ENCODE measurements at regions of chr16 and their contacts with region 1.

Region 1: GRCh38 chr16:75219838-75220237 is 1.1 kb downstream of the CTRB1 start:
- DNase-seq: peak in 1 of 6 donors; percentile 41
- ATAC-seq: no peak
- H3K4me3 ChIP-seq: peak overlapping the region; percentile 11 to 60 (median 46)
- H3K27ac ChIP-seq: peak overlapping the region; percentile 86 to 98 (median 91)
- H3K4me1 ChIP-seq: peaks cover 4 to 11% (median 11%) of the 10 kb centered on the region in 3 donors
- H3K27me3 ChIP-seq: no peaks in the 10 kb centered on the region
- CTCF ChIP-seq: no peak

Region 2: DNA sequence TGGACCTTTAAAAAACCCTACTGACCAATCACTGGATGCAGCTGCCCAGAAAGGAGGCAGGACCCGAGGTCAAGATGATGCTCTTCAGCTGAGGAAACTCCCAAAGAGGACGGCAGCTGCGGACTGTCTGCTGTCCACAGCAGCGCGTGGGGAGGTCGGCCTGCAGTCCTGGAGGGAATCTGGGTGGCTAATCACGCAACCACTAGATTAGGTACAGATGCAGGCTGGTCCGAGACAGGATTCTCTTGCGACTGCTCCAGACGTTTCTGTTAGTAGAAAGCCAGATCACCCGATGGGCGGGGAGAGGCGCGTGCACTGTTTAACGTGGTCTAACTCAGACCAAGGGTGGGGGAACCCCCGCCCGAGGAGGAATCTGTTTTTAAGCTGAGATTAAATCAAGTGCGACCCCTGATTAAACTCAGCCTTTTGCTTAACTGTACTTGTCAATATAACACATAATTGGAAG is 21.7 kb before region 1 on chr16:
- intact Hi-C with region 1: loop called in 1 of 3 experiments (anchors 2 kb)
- DNase-seq: peak in 4 of 6 donors; percentile 48 to 68 (median 64)
- ATAC-seq: peak in 1 of 4 donors; percentile 10
- H3K4me3 ChIP-seq: no peak overlapping the region
- H3K27ac ChIP-seq: no peak overlapping the region
- H3K4me1 ChIP-seq: no peaks in the 10 kb centered on the region
- H3K27me3 ChIP-seq: no peaks in the 10 kb centered on the region
- CTCF ChIP-seq: no peak

Region 3: DNA sequence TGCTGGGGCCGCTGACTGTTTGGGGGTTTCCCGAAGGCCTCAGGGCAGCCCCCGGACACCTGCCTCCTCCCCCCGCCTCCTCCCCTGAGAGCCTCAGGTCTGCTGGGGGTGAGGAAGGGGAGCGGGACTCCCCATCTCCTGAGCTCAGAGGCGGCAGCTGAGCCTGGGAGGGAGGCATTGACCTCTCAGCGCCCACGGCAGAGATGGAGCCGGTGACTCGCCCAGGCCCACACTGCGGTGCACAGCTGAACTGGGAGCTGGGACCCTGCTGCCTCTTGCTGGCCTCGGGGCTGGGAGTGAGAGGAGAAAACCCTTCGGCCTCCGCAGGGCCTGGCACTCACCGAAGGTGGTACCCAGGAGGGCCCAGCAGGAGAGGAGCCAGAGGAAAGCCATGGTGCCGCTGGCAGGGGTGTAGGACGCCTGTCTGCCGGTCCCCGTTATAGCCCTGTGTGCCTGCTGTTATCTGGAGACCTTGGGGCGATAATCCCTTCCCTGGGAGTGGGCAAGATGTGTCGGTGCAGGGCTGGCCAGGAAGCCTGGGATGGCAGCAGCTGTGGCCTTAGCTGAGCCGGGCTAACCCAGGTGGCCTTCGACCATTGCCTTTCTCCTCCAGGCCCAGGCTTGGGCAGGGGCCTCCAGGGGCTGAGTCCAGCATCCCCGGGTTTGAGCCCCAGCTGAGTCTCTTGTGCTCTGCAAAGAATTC is 12.9 kb before region 1 on chr16 and contains the start of gene CTRB2:
- intact Hi-C with region 1: loop called in 1 of 3 experiments (anchors 2 kb)
- DNase-seq: peak; percentile 82 to 96 (median 94)
- ATAC-seq: peak; percentile 52 to 77 (median 74)
- H3K4me3 ChIP-seq: peak within 1 kb of the TSS; percentile 45 to 83 (median 61)
- H3K27ac ChIP-seq: peak within 1 kb of the TSS; percentile 85 to 98 (median 92)
- H3K4me1 ChIP-seq: peaks cover 5 to 10% (median 7%) of the 10 kb centered on the region in 3 donors
- H3K27me3 ChIP-seq: no peaks in the 10 kb centered on the region
- CTCF ChIP-seq: no peak
- total RNA-seq, gene CTRB2: 36,685 to 57,899 (median 39,778) TPM